Prostate gland (tissue), 2 donors: ENCODE measurements at regions of chr4 and their contacts with region 1.

Region 1: GRCh38 chr4:140529434-140529833 is 5.5 kb downstream of the ELMOD2 start:
- DNase-seq: no peak
- H3K4me3 ChIP-seq: no peak overlapping the region
- H3K27ac ChIP-seq: no peak overlapping the region
- H3K4me1 ChIP-seq: no peaks in the 10 kb centered on the region
- H3K27me3 ChIP-seq: no peaks in the 10 kb centered on the region
- CTCF ChIP-seq: no peak
- POLR2A ChIP-seq: no peak

Region 2: DNA sequence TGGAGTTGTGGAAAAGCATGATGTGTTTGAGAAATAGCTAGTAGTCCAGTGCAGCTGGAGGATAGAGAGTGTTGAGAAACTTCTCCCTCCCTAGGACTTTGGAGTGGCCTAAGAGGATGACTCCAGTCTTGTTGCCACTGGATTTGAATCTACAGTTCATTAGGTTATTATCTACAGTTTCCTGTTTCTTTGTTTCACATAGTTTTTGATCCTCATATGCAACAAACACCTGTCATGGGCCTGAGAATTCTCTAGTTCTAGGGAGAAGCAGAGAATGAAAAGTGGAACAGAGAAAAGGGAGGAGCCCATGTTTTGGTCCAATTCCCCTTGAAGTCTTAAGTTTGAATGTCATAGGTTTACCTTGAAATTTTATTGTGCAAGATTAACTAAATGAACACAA is 300.4 kb after region 1 on chr4:
- intact Hi-C with region 1: no loop called
- DNase-seq: no peak
- H3K4me3 ChIP-seq: no peak overlapping the region
- H3K27ac ChIP-seq: no peak overlapping the region
- H3K4me1 ChIP-seq: no peaks in the 10 kb centered on the region
- H3K27me3 ChIP-seq: no peaks in the 10 kb centered on the region
- CTCF ChIP-seq: no peak
- POLR2A ChIP-seq: no peak

Region 3: GRCh38 chr4:140851032-140851636 is 321.7 kb after region 1 on chr4:
- intact Hi-C with region 1: loop called (anchors 5 kb)
- DNase-seq: peak; percentile 56
- H3K4me3 ChIP-seq: no peak overlapping the region
- H3K27ac ChIP-seq: no peak overlapping the region
- H3K4me1 ChIP-seq: no peaks in the 10 kb centered on the region
- H3K27me3 ChIP-seq: no peaks in the 10 kb centered on the region
- CTCF ChIP-seq: peak; percentile 26 to 88 (median 78)
- POLR2A ChIP-seq: no peak